Activated CD8-positive, alpha-beta T cell treated with anti-CD3 and anti-CD28 coated beads for 36 hours (primary cell): ENCODE measurements at regions of chr16 and their contacts with region 1.

Region 1: DNA sequence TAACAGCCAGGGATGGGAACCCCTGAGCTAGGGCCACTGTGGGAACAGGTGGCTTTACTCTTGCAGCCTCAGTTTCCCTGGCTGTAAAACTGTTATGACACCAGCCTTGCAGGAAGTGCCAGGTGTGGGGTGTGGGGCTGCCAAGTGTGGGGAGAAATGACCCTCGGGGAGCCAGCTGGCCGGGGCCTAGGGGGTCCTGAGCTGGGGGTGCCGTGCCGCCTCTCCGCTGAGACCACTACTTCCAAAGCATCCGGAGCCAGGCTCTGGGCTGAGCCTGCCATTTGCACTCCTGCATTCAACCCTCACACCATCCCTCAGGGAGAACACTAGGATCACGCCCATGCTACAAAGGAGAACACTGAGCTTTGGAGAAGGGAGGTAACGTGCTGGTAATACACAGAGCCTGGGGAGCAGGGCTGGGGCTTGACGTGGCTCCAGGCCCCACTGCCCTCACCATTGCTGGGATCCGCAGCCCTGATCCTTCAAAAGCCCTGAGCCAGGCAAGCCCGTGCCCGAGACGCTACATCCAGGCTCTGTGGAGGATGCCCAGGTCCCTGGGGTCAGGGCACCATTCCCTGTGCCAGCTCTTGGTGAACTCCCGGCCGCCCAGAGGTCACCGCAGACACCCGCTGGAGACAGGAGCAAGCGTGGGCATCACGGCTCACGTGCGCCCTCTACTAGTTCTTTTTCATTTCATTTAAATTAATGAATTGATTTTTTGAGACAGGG is 28.8 kb upstream of the GINS2 start:
- DNase-seq: peak; percentile 78
- ATAC-seq: peak; percentile 68
- H3K4me3 Mint-ChIP-seq: no peak overlapping the region
- H3K27ac Mint-ChIP-seq: no peak overlapping the region
- H3K4me1 Mint-ChIP-seq: peaks cover 9% of the 10 kb centered on the region
- H3K27me3 Mint-ChIP-seq: no peaks in the 10 kb centered on the region
- CTCF ChIP-seq: peak; percentile 92

Region 2: DNA sequence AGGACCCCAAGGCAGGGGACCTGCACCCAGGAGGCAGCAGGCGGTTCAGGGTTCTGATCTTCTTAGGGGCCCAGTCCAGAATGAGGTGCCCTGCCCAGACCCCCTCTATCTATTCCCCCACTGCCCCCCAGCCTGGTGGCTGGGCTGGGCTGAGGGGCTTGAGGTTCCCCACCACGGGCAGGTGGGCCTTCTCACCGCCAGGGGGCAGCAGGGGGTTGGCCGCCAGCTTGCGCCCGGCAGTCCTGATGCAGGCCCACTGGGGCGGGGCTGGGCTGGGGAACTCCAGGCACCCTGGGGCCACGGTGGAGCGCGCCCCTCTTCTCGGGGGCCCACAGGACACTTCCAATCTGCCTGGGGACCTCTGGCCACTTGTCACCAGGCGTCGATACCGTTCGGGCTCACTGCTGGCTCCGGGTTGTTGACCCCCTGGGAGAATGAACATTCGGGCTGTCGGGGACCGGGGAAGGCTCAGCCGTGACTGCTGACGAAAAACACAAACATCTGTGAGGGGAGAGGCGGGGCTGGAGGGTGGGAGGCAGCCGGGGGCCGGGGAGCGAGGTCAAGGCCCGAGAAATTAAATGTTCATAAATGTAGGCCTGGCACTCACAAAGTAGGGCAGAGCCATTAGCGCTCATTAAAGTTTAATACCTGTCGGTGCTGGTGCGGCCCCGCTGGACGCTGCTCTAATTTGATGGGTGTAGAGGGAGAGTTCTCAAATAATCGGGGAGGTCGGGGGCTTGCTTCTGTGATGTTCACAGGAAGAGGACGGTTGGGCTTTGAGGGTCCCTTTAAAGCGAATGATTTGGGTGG is 323.7 kb before region 1 on chr16:
- CTCF ChIA-PET with region 1: interaction called, 10 read pairs
- POLR2A ChIA-PET with region 1: no interaction called
- intact Hi-C with region 1: loop called (anchors 10 kb)
- DNase-seq: peak; percentile 77
- ATAC-seq: peak; percentile 88
- H3K4me3 Mint-ChIP-seq: no peak overlapping the region
- H3K27ac Mint-ChIP-seq: no peak overlapping the region
- H3K4me1 Mint-ChIP-seq: no peaks in the 10 kb centered on the region
- H3K27me3 Mint-ChIP-seq: peaks cover 2% of the 10 kb centered on the region
- CTCF ChIP-seq: peak; percentile 91

Region 3: DNA sequence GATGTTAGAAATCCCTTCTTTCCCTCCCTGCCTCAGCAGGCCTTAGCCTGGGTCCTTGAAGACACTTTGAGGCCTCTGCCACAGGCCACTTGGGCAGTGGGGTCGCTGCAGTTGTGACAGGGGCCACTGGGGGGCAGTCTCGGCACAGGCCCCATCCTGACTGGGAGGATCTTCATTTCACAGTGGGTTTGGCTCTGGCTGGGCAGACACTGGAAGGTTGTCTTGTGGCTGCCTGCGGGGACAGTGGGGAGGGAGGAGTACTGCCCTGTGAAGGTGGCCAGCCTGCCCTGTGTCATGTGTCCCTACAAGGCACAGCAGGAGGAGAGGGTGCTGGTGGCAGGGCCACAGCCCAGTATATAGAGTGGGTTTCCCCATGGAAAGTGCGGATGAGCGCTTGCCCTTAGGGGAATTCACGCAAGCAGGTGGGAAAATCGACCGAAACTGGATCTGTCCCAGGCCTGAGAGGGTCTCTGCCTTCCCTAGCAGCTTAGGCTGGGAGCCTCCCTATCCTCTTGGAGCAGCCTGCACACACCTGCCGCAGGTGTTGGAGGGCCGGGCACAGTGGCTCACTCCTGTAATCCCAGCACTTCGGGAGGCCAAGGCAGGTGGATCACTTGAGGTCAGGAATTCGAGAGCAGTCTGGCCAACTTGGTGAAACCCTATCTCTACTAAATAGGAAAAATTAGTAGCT is 57.6 kb before region 1 on chr16:
- CTCF ChIA-PET with region 1: interaction called, 84 read pairs
- POLR2A ChIA-PET with region 1: no interaction called
- intact Hi-C with region 1: no loop called
- DNase-seq: peak; percentile 83
- ATAC-seq: peak; percentile 97
- H3K4me3 Mint-ChIP-seq: no peak overlapping the region
- H3K27ac Mint-ChIP-seq: no peak overlapping the region
- H3K4me1 Mint-ChIP-seq: no peaks in the 10 kb centered on the region
- H3K27me3 Mint-ChIP-seq: no peaks in the 10 kb centered on the region
- CTCF ChIP-seq: peak; percentile 82

Region 4: GRCh38 chr16:85673529-85674417 is 43.8 kb before region 1 on chr16:
- CTCF ChIA-PET with region 1: interaction called, 11 read pairs
- POLR2A ChIA-PET with region 1: interaction called, 3 read pairs
- intact Hi-C with region 1: loop called (anchors 5 kb)
- DNase-seq: no peak
- ATAC-seq: no peak
- H3K4me3 Mint-ChIP-seq: no peak overlapping the region
- H3K27ac Mint-ChIP-seq: no peak overlapping the region
- H3K4me1 Mint-ChIP-seq: peaks cover 6% of the 10 kb centered on the region
- H3K27me3 Mint-ChIP-seq: no peaks in the 10 kb centered on the region
- CTCF ChIP-seq: no peak

Region 5: DNA sequence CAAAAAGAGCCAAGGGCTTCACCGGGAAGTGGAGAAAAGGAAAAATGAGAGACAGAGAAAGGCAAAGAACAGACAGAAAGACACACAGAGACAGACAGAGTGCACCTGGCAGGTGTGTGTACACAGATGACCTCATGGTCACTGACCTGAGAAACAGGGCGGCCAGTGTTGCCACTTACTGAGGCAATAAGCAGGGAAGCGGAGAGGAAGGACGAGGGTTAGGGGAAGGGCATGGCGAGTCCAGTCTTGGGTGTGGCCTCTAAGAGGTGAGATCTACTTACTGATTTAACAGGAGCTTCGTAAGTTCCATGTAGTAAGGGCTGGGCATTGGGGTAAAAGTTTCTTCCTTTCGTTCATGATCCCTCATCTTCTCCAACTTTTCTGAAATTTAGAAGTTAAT is 36.3 kb before region 1 on chr16:
- CTCF ChIA-PET with region 1: interaction called, 11 read pairs
- POLR2A ChIA-PET with region 1: interaction called, 3 read pairs
- intact Hi-C with region 1: no loop called
- DNase-seq: no peak
- ATAC-seq: no peak
- H3K4me3 Mint-ChIP-seq: no peak overlapping the region
- H3K27ac Mint-ChIP-seq: no peak overlapping the region
- H3K4me1 Mint-ChIP-seq: peaks cover 4% of the 10 kb centered on the region
- H3K27me3 Mint-ChIP-seq: no peaks in the 10 kb centered on the region
- CTCF ChIP-seq: no peak

Region 6: DNA sequence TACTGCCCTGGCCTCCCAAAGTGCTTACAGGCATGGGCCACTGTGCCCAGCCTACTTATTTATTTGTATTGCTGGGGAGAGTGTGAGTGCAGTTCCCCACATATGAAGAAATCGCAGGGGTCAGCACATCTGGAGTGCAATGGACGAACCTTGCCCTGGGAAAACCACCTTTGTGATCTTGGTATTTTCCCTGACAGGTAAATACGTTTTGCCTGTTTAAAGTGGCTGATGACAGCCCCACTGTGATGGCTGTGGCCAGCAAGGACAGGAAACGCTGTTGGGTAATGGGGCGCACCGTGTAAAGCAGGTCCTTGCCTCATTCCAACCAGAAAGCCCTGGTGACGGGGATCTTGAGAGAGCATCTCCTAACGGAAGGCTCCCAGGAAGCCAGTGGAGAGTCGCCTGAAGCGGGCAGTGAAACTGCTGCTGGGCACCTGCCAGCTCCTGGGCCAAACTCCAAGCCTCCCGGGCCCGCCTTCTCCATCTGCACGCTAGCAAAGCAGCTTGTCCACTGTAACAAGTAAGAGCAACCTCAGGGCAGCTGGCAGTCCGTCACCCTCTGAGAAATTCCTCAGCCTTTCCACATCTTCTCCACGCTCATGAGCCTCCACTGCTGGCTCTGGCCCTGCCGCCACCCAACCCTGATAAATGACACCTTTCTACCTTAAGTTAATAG is 64.3 kb after region 1 on chr16:
- CTCF ChIA-PET with region 1: no interaction called
- POLR2A ChIA-PET with region 1: no interaction called
- intact Hi-C with region 1: no loop called
- DNase-seq: no peak
- ATAC-seq: no peak
- H3K4me3 Mint-ChIP-seq: no peak overlapping the region
- H3K27ac Mint-ChIP-seq: no peak overlapping the region
- H3K4me1 Mint-ChIP-seq: peaks cover 14% of the 10 kb centered on the region
- H3K27me3 Mint-ChIP-seq: no peaks in the 10 kb centered on the region
- CTCF ChIP-seq: no peak